Heart right ventricle (tissue), 16 donors: ENCODE measurements at regions of chr5 and their contacts with region 1.

Region 1: DNA sequence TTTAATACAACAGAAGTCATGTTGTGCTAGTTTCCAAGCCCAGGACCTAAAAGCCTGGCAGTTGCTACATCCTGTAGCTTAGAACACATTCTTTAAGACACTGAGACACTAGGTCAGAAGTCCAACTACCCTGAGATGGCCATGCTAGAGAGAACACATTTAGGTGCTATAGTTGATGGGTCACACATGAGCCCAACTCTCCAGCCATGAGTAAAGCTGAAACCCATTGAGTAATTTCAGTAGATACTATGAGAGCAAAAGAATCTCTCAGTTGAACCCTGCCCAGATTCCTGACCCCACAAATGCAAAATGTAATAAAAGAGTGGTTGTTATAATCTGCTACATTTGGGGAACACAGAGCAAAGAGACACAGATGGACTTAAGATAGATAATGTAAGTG is 164.4 kb downstream of the SEMA5A start:
- DNase-seq: no peak
- ATAC-seq: no peak
- H3K4me3 ChIP-seq: no peak overlapping the region
- H3K27ac ChIP-seq: peak overlapping the region in 1 of 10 donors; percentile 8
- H3K4me1 ChIP-seq: peaks cover 0 to 15% (median 4%) of the 10 kb centered on the region in 9 donors
- H3K27me3 ChIP-seq: no peaks in the 10 kb centered on the region
- CTCF ChIP-seq: no peak

Region 2: GRCh38 chr5:9251379-9251980 is 130.0 kb before region 1 on chr5:
- intact Hi-C with region 1: no loop called
- DNase-seq: no peak
- ATAC-seq: no peak
- H3K4me3 ChIP-seq: no peak overlapping the region
- H3K27ac ChIP-seq: no peak overlapping the region
- H3K4me1 ChIP-seq: no peaks in the 10 kb centered on the region
- H3K27me3 ChIP-seq: no peaks in the 10 kb centered on the region
- CTCF ChIP-seq: no peak

Region 3: GRCh38 chr5:9513827-9514226 is 132.4 kb after region 1 on chr5:
- intact Hi-C with region 1: loop called in 1 of 10 experiments (anchors 10 kb)
- DNase-seq: no peak
- ATAC-seq: no peak
- H3K4me3 ChIP-seq: no peak overlapping the region
- H3K27ac ChIP-seq: peak overlapping the region in 8 of 10 donors; percentile 8 to 77 (median 62)
- H3K4me1 ChIP-seq: peaks cover 0 to 67% (median 26%) of the 10 kb centered on the region in 9 donors
- H3K27me3 ChIP-seq: no peaks in the 10 kb centered on the region
- CTCF ChIP-seq: peak in 4 of 9 donors; percentile 30 to 40 (median 36)

Region 4: GRCh38 chr5:10339058-10339811 is 957.8 kb after region 1 on chr5:
- intact Hi-C with region 1: no loop called
- DNase-seq: no peak
- ATAC-seq: peak in 1 of 8 donors; percentile 32
- H3K4me3 ChIP-seq: no peak overlapping the region
- H3K27ac ChIP-seq: no peak overlapping the region
- H3K4me1 ChIP-seq: peaks cover 0 to 12% (median 0%) of the 10 kb centered on the region in 9 donors
- H3K27me3 ChIP-seq: peaks cover 0 to 6% (median under 1%) of the 10 kb centered on the region in 7 donors
- CTCF ChIP-seq: no peak